ENCODE measurements at regions of chr6 and their contacts with region 1.

Region 1: DNA sequence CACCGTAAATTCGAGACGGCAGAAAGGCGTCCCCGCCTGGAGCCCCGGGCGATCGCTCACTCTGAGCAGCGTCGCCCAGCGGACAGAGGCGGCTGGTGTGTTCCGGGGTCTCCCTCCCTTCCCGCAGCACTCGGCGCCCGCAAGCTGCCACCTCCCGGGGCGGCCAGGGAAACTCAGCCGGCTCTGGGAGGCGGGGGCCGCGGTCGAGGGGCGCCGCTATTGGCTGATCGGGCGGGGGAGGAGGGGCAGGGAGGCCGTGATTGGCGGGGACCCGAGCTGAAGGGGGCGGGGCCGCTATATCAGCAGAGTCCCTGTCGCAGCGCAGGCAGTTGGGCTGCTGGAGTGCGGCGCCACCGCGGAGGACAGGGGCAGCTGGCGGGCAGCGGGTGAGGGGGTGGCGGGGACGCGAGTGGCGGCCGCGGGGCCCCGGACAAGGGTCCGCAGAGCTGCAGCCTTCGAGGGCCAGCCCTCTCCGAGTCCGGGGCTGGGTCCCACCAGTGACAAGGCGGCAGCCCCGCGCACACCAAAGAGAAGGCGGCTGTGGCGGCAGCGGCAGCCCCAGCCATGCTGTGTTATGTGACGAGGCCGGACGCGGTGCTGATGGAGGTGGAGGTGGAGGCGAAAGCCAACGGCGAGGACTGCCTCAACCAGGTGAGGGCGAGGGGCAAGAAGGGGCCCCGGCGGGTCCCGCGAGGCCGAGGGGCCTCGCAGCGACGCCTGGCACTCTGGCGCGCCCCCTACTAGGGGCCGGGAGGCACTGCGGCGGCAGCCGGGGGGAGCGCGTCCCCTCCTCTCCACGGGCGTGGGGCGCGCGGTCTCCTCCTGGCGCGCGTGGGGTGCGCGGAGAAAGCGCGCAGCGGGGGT is at the start of gene MYLIP:
- DNase-seq: peak; percentile 97 to 99
- H3K4me3 ChIP-seq: peak within 1 kb of the TSS; percentile 99
- H3K4me3 Mint-ChIP-seq: peak within 1 kb of the TSS; percentile 92
- H3K27ac Mint-ChIP-seq: peak within 1 kb of the TSS; percentile 80
- H3K4me1 ChIP-seq: peaks cover 22% of the 10 kb centered on the region
- H3K4me1 Mint-ChIP-seq: peaks cover 10% of the 10 kb centered on the region
- H3K27me3 ChIP-seq: no peaks in the 10 kb centered on the region
- H3K27me3 Mint-ChIP-seq: no peaks in the 10 kb centered on the region
- CTCF ChIP-seq: peak; percentile 57 to 94
- total RNA-seq, gene MYLIP: 46.5 and 48.1 TPM in 2 replicates

Region 2: GRCh38 chr6:15763837-15764236 is 365.2 kb before region 1 on chr6:
- CTCF ChIA-PET with region 1: no interaction called
- POLR2A ChIA-PET with region 1: interaction called, 11 read pairs
- intact Hi-C with region 1: no loop called
- DNase-seq: peak; percentile 42 to 51
- H3K4me3 ChIP-seq: no peak overlapping the region
- H3K4me3 Mint-ChIP-seq: no peak overlapping the region
- H3K27ac Mint-ChIP-seq: no peak overlapping the region
- H3K4me1 ChIP-seq: peaks cover 6% of the 10 kb centered on the region; the same call in 1 of the 2 replicates
- H3K4me1 Mint-ChIP-seq: peaks cover 8% of the 10 kb centered on the region
- H3K27me3 ChIP-seq: no peaks in the 10 kb centered on the region; the same call in 1 of the 2 replicates
- H3K27me3 Mint-ChIP-seq: no peaks in the 10 kb centered on the region
- CTCF ChIP-seq: no peak

Region 3: GRCh38 chr6:15970517-15970916 is 158.5 kb before region 1 on chr6:
- CTCF ChIA-PET with region 1: no interaction called
- POLR2A ChIA-PET with region 1: interaction called, 11 read pairs
- intact Hi-C with region 1: no loop called
- DNase-seq: peak; percentile 42 to 55
- H3K4me3 ChIP-seq: no peak overlapping the region
- H3K4me3 Mint-ChIP-seq: no peak overlapping the region
- H3K27ac Mint-ChIP-seq: no peak overlapping the region
- H3K4me1 ChIP-seq: peaks cover 6% of the 10 kb centered on the region; the same call in 1 of the 2 replicates
- H3K4me1 Mint-ChIP-seq: peaks cover 7% of the 10 kb centered on the region
- H3K27me3 ChIP-seq: no peaks in the 10 kb centered on the region
- H3K27me3 Mint-ChIP-seq: no peaks in the 10 kb centered on the region
- CTCF ChIP-seq: no peak

Region 4: DNA sequence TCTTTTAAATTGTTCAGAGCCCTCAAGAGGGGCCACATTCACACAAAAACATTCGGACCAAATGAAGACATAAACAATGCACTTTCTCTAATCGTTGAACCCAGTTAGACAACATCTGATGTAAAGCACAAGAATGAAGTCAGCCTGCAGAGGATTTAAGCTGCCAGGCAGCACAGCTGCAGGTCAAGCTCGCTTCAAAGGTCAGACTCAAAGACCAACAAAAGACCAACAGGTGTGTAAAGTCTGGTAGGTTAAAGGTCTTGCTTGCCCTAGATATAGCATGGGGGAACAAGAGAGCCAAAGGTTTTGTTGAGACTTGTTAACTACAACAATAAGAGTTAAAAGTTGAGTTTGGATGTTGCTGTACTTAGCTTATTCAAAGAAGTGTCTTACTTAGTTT is 26.8 kb before region 1 on chr6:
- CTCF ChIA-PET with region 1: interaction called, 13 read pairs
- POLR2A ChIA-PET with region 1: interaction called, 16 read pairs
- intact Hi-C with region 1: no loop called
- DNase-seq: peak; percentile 58 to 69
- H3K4me3 ChIP-seq: no peak overlapping the region
- H3K4me3 Mint-ChIP-seq: peak overlapping the region; percentile 40
- H3K27ac Mint-ChIP-seq: no peak overlapping the region
- H3K4me1 ChIP-seq: peaks cover 61% of the 10 kb centered on the region
- H3K4me1 Mint-ChIP-seq: peaks cover 35% of the 10 kb centered on the region
- H3K27me3 ChIP-seq: no peaks in the 10 kb centered on the region
- H3K27me3 Mint-ChIP-seq: no peaks in the 10 kb centered on the region
- CTCF ChIP-seq: no peak

Region 5: DNA sequence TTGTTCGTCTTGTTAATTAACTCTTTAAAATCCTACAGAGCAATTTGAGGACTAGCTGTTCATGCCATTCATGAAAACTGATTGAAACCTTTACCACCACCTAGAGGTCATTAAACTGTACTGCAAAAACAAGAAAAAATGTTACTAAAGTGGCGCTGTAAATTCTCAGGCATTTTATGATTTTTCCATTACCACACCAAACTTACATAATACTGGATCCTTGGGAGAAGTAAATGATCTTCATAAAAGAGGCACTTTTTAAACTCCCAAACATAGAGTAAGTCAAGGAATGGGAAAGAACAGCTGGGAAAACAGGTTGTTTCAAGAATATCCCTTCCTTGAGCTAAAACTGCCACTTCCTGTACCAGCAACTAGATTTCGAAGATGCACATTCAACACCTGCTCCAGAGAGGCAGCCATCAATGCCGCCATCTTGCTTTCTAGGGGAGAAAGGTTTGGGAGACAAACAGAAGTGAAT is 54.2 kb after region 1 on chr6:
- CTCF ChIA-PET with region 1: interaction called, 18 read pairs
- POLR2A ChIA-PET with region 1: interaction called, 13 read pairs
- intact Hi-C with region 1: loop called (anchors 1 kb)
- DNase-seq: no peak
- H3K4me3 ChIP-seq: no peak overlapping the region
- H3K4me3 Mint-ChIP-seq: no peak overlapping the region
- H3K27ac Mint-ChIP-seq: peak overlapping the region; percentile 35
- H3K4me1 ChIP-seq: peaks cover 36% of the 10 kb centered on the region
- H3K4me1 Mint-ChIP-seq: peaks cover 8% of the 10 kb centered on the region
- H3K27me3 ChIP-seq: no peaks in the 10 kb centered on the region
- H3K27me3 Mint-ChIP-seq: no peaks in the 10 kb centered on the region
- CTCF ChIP-seq: peak; percentile 47 to 65